BJ (cell line): ENCODE measurements at regions of chr9 and their contacts with region 1.

Region 1: DNA sequence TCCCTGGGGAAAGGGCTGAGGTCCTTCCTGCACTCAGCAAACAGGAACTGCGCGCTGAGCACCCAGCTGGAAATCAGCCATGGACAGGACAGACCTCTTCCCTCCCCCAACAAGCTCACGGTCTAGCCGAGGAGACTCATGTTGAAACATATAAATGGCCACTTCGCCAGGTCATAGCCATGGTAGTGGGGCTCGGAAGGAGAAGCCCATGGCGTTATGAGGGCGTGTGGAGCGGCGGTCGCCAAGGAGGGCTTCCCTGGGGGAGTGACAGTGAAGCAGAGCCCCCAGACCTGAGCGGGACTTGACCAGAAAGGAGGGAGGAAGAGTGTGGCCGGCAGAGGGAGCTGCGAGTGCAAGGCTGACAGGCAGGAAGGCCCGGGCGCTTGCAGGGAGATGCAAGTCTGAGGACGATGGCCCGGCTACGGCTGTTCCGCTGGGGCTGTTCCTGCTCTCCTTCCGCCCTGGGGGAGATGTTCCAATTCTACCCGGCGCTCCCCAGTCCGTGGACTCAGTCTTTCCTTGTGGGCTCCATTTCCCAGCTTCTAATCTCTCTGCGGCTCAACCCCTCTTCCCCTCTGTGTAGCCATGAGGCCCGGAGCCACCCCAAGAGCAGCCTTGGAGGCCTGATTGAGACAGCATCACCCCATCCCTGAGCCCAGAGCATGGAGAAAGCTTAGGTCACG is 43.9 kb upstream of the PRRC2B start:
- DNase-seq: no peak
- H3K4me3 ChIP-seq: peak overlapping the region; percentile 27
- H3K27me3 ChIP-seq: no peaks in the 10 kb centered on the region
- CTCF ChIP-seq: peak; percentile 93

Region 2: DNA sequence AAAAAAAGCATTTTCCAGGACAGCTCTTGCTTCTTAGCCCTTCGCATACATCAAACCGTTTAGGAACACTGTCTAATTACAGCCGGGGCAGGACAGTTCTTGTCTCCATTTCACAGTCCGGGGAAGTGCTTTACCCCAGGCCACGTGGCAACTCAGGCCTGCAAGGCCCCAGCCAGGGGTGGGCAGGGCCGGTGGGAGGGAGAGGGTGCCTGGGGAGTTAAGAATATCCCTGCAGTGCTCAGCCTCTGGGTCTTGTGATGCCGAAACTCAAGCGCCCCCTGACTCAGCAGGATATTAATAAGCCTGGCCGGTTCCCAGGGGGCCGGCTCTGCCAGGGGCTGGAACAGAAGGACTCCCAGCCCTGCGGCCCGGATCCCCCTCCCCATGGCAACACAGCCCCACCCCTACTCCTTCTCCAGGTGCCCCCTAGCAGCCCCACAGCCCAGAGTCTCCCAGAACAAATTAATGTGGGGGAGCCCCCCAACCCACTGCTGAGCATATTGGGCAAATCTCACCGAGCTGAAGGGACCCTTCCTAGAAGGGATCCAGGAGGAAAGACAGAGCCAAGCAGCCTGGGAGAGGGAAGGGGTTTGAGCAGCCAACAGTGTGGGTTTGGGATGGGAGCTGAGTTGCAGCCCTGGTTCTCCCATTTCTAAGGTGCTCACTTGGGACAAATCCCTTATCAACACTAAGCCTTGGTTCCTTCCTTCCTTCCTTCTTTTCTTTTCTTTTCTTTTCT is 15.2 kb before region 1 on chr9:
- CTCF ChIA-PET with region 1: interaction called, 34 read pairs
- POLR2A ChIA-PET with region 1: no interaction called
- DNase-seq: no peak
- H3K4me3 ChIP-seq: no peak overlapping the region
- H3K27me3 ChIP-seq: no peaks in the 10 kb centered on the region
- CTCF ChIP-seq: no peak

Region 3: GRCh38 chr9:131361202-131361833 is 11.3 kb after region 1 on chr9:
- CTCF ChIA-PET with region 1: interaction called, 12 read pairs
- POLR2A ChIA-PET with region 1: no interaction called
- DNase-seq: no peak
- H3K4me3 ChIP-seq: no peak overlapping the region
- H3K27me3 ChIP-seq: no peaks in the 10 kb centered on the region
- CTCF ChIP-seq: no peak

Region 4: DNA sequence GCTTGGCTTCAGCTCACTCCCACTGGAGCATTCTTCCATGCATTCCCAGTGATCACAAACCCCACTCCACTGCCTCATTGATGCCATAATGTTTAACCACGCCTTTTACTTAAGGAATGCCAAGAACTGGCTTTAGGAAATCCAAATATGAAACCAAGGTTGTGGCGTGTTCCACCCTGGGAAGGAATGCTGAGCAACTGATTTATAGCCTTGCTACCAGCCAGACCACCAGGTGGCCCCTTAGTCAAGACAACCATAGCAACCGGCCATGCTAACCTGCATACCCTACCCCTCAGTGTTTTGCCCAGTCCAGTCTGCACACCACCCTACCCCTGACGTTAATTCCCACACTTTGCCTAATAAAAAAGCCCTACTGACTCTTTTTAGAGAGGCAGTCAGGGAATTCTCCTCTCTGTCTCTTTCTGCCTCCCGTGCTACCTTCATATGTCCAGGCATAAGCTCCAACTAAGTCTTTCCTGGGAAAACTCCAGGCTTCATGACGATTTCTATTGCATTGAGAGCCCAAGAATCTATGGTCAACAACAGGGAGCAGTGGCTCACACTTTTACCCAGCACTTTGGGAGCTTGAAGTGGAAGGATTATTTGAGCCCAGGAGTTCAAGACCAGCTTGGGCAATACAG is 16.9 kb after region 1 on chr9:
- CTCF ChIA-PET with region 1: interaction called, 11 read pairs
- POLR2A ChIA-PET with region 1: no interaction called
- DNase-seq: peak; percentile 32
- H3K4me3 ChIP-seq: no peak overlapping the region
- H3K27me3 ChIP-seq: no peaks in the 10 kb centered on the region
- CTCF ChIP-seq: peak; percentile 34

Region 5: GRCh38 chr9:131432597-131433306 is 82.7 kb after region 1 on chr9:
- CTCF ChIA-PET with region 1: interaction called, 12 read pairs
- POLR2A ChIA-PET with region 1: no interaction called
- DNase-seq: peak; percentile 79
- H3K4me3 ChIP-seq: no peak overlapping the region
- H3K27me3 ChIP-seq: no peaks in the 10 kb centered on the region
- CTCF ChIP-seq: 0 out of 2 replicates have a peak, but pooled peaks have one; percentile 9

Region 6: DNA sequence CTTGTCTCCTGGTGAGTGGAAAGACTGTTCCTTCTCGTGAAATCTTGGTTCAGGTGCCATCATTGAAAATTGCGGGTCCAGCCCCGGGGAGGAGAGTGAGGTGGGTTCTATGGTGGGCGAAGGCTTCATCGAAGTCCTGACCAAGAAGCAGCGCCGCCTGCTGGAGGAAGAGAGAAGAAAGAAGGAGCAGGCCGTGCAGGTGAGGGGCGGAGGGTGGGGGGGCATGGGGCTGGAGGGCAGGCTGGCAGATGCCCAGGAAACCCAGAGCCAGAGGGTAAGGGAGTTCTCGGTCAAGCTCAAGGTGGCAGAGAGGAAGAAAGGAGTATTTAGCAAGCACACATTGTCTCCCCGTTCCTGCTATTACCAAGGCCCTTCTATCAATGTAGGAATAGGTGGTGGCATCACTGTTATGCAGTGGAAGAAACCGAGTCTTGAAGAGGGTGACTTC is 128.4 kb after region 1 on chr9:
- CTCF ChIA-PET with region 1: interaction called, 34 read pairs
- POLR2A ChIA-PET with region 1: no interaction called
- DNase-seq: no peak
- H3K4me3 ChIP-seq: no peak overlapping the region
- H3K27me3 ChIP-seq: no peaks in the 10 kb centered on the region
- CTCF ChIP-seq: peak; percentile 70